ENCODE measurements at regions of chr14 and their contacts with region 1.

Region 1: DNA sequence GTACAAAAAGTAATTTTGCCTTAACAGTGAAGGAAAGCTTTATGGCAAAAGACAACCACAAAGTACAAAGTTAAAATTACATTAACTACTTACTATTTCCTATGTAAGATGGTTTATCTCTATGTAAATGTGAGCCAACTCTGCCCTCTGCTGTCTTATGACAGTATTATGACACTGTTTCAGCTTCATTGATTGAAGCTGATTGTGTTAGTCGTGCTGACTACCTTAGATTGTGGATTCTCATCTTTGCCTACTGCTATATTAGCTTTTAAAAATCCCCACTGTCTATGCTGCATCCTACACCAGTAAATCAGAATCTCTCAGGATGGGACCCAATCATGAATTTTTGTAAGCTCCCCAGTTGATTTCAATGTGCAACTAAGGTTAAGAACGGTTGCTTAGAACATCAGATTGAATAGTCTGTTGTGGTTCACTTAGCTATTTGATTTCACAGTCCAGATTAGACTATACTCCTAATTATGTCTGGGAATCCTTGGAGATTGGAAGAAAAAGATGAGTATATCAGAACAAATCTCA is 12.2 kb upstream of the SPTB start:
- DNase-seq: no peak

Region 2: DNA sequence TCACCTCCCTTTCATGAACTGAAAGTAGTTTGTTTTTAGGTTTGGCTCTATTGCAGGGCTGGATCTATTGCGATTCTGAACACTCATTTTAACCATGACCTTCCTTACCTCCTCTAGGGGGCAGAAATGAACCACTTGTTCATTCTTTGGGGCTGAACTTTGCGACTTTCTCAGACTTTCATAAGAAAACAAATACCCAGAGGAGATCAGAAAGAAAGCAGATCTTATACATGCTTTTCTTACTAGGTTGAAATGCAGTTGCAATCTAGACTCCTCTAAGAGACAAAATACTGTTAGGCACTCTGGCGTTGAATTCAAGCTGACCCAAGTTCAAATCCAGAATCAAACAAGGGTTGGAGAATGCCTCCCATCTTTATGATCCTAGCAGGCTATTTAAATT is 220.3 kb before region 1 on chr14:
- intact Hi-C with region 1: loop called (anchors 5 kb)
- DNase-seq: no peak

Region 3: GRCh38 chr14:64764641-64765520 is 127.0 kb before region 1 on chr14:
- intact Hi-C with region 1: no loop called
- DNase-seq: peak; percentile 85

Region 4: GRCh38 chr14:64800000-64800399 is 91.9 kb before region 1 on chr14:
- intact Hi-C with region 1: loop called (anchors 5 kb)
- DNase-seq: no peak

Region 5: GRCh38 chr14:64823305-64823861 is 68.5 kb before region 1 on chr14:
- intact Hi-C with region 1: loop called (anchors 5 kb)
- DNase-seq: peak; percentile 89

Measured in cardiac septum (tissue), 1 donor.